Activated CD4-positive, alpha-beta memory T cell treated with anti-CD3 and anti-CD28 coated beads, Interleukin-2, amount 10 ng/mL, durations not matched to agents 7 days and 5 days (primary cell): ENCODE measurements at regions of chr3 and their contacts with region 1.

Region 1: DNA sequence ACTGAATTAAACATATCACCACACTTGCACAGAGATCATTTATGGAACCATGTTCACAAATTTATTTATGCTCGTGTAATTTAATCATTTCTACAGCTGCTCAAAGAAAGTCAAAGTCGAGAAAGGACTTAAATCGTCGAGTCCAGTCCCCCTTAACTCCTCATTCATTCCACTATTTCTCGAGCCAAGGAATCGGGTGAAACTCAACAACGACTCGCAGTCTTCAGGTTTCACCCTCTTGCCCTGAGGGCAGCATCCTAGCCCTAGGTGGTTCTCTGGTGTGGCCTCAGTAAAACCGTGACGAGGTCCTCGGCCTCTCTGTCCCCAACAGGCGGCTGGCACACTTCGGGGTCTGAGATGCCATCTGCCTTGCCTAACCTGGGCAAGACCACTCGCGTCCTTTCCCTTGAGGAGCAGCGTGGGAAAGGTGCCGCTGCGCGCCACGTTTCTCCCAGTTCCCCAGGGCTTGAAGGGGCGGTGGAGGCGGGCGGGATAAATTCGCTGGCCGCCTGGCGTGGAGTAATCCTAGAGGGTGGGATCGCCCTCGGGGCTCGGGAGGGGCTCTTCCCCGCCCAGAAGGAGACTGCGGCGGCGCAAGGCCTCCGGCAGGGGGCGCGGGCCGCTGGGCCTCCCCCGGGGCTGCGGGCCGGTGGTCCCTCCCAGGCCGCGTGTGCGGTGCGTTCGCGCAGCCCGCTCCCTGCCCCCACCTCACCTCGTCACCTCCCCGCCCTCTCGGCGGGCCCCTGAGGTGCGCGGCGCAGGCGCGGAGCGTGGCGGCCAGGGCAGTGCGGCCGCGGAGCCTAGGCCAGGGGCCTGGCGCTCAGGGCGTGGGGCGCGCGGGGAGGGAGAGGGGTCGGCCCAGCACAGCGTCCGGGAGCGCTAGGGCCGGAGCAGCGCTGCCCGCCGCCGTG is at the start of gene ZNF639:
- DNase-seq: peak; percentile 81
- H3K4me3 Mint-ChIP-seq: peak within 1 kb of the TSS; percentile 84
- H3K27ac Mint-ChIP-seq: peak within 1 kb of the TSS; percentile 84
- H3K4me1 Mint-ChIP-seq: peaks cover 25% of the 10 kb centered on the region
- H3K27me3 Mint-ChIP-seq: peaks cover 10% of the 10 kb centered on the region
- total RNA-seq, gene ZNF639: 29.8 to 31.5 TPM

Region 2: DNA sequence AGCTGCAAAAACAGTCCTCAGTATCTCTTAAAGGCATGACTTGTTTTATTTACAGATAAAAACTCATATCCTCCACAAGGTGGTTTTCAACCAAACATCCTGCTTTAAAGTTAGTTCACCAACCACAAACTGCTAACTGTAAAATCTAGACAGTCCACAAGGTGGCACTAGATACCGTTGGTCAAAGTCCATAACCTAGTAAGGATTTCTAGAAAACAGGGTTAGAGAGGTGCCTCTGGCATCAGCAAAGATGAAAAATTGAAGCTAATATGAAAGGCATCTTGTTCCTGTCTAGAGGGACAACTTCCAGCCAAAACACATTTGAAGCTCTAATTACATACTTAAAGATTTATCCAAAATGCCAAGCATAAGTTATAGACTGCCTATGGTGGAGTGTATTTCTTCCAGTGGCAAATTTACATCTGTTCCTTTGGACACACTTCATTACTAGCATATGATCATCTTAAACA is 307.0 kb before region 1 on chr3:
- CTCF ChIA-PET with region 1: interaction called, 23 read pairs
- POLR2A ChIA-PET with region 1: interaction called, 6 read pairs
- DNase-seq: peak; percentile 67
- H3K4me3 Mint-ChIP-seq: no peak overlapping the region
- H3K27ac Mint-ChIP-seq: peak overlapping the region; percentile 45
- H3K4me1 Mint-ChIP-seq: peaks cover 40% of the 10 kb centered on the region
- H3K27me3 Mint-ChIP-seq: peaks cover 10% of the 10 kb centered on the region

Region 3: GRCh38 chr3:179147873-179148615 is 174.5 kb before region 1 on chr3 and contains the start of gene PIK3CA:
- CTCF ChIA-PET with region 1: interaction called, 20 read pairs
- POLR2A ChIA-PET with region 1: interaction called, 32 read pairs
- DNase-seq: peak; percentile 96
- H3K4me3 Mint-ChIP-seq: peak within 1 kb of the TSS; percentile 95
- H3K27ac Mint-ChIP-seq: peak within 1 kb of the TSS; percentile 92
- H3K4me1 Mint-ChIP-seq: peaks cover 32% of the 10 kb centered on the region
- H3K27me3 Mint-ChIP-seq: peaks cover 22% of the 10 kb centered on the region
- total RNA-seq, gene PIK3CA: 25.9 to 26.2 TPM

Region 4: GRCh38 chr3:179347345-179348194 is 25.0 kb after region 1 on chr3 and contains the start of gene MFN1:
- CTCF ChIA-PET with region 1: interaction called, 11 read pairs
- POLR2A ChIA-PET with region 1: interaction called, 42 read pairs
- DNase-seq: peak; percentile 93
- H3K4me3 Mint-ChIP-seq: peak within 1 kb of the TSS; percentile 94
- H3K27ac Mint-ChIP-seq: peak within 1 kb of the TSS; percentile 84
- H3K4me1 Mint-ChIP-seq: peaks cover 25% of the 10 kb centered on the region
- H3K27me3 Mint-ChIP-seq: no peaks in the 10 kb centered on the region
- total RNA-seq, gene MFN1: 30.6 to 31.2 TPM

Region 5: GRCh38 chr3:179526989-179527391 is 204.4 kb after region 1 on chr3:
- CTCF ChIA-PET with region 1: no interaction called
- POLR2A ChIA-PET with region 1: no interaction called
- DNase-seq: no peak
- H3K4me3 Mint-ChIP-seq: no peak overlapping the region
- H3K27ac Mint-ChIP-seq: no peak overlapping the region
- H3K4me1 Mint-ChIP-seq: no peaks in the 10 kb centered on the region
- H3K27me3 Mint-ChIP-seq: peaks cover 15% of the 10 kb centered on the region

Region 6: DNA sequence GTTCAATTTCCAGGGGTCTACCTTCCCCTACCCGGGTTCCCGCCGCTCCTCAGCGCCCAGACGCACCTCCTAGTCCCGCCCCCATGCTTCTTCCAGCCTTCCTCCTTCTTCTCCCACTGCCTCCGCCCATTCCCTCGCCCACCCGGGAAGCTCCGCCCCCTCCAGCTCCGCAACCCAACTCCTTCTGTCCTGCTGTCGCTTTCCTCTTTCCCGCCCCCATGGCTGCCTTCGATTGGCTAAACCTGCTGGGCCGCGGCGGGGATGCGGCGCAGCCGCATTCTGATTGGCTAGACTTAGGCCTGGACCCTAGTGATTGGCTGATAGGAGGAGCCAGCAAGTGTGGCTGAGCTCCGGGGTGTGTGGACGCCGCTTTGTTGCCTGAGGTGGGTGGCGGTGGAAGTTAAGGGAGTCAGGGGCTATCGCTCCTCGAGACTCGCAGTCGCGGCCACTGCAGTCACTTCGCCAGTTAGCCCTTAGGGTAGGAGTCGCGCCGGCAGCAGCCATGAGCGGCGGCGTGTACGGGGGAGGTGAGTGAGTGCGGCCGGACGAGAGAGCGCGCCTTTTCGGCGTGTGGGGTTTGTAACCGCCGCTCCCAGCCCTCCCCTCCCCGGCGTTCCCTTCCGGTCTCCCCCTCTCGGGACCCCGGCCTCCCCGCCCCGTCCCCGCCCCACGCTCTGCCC is 240.2 kb after region 1 on chr3 and contains the start of gene ACTL6A:
- CTCF ChIA-PET with region 1: interaction called, 12 read pairs
- POLR2A ChIA-PET with region 1: interaction called, 16 read pairs
- DNase-seq: peak; percentile 99
- H3K4me3 Mint-ChIP-seq: peak within 1 kb of the TSS; percentile 96
- H3K27ac Mint-ChIP-seq: peak within 1 kb of the TSS; percentile 88
- H3K4me1 Mint-ChIP-seq: peaks cover 36% of the 10 kb centered on the region
- H3K27me3 Mint-ChIP-seq: peaks cover 15% of the 10 kb centered on the region
- total RNA-seq, gene ACTL6A: 75.1 to 81.3 TPM

Region 7: DNA sequence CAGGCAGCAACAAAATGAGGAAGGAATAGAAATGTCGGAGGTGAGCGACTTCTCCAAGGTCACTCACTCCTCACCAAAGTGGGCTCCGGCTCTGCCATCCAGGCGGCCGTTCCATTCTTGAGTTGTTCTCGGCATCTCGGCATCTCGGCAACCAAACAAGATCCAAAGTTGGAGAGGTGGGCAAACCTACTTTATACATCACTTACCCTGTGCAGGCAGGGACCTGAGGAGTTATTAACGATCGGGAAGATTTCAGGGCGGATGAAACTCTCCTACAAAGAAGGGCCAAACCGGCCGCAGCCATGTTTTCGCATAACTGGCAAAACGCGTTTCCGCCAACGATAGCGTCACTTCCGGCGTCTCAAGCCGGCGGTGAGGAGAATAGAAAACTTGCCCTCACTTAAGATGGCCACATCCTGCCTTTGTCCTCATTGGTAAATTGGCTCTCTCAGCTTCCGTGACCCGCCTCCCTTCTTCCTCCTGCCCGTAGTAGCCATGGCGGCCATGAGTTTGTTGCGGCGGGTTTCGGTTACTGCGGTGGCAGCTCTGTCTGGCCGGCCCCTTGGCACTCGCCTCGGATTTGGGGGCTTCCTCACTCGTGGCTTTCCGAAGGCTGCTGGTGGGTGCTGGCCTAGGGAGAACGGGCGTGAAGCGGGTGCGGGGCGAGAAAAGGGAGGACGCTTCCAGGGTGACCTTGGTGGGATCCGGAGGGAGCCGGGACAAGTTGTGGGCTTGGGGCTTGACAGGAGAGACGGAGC is 282.0 kb after region 1 on chr3 and contains the starts of genes MRPL47 and NDUFB5:
- CTCF ChIA-PET with region 1: no interaction called
- POLR2A ChIA-PET with region 1: interaction called, 13 read pairs
- DNase-seq: peak; percentile 94
- H3K4me3 Mint-ChIP-seq: peak within 1 kb of the TSS; percentile 99
- H3K27ac Mint-ChIP-seq: peak within 1 kb of the TSS; percentile 96
- H3K4me1 Mint-ChIP-seq: peaks cover 59% of the 10 kb centered on the region
- H3K27me3 Mint-ChIP-seq: no peaks in the 10 kb centered on the region
- total RNA-seq, gene MRPL47: 34.8 to 36.0 TPM
- total RNA-seq, gene NDUFB5: 102 to 110 TPM

Region 8: DNA sequence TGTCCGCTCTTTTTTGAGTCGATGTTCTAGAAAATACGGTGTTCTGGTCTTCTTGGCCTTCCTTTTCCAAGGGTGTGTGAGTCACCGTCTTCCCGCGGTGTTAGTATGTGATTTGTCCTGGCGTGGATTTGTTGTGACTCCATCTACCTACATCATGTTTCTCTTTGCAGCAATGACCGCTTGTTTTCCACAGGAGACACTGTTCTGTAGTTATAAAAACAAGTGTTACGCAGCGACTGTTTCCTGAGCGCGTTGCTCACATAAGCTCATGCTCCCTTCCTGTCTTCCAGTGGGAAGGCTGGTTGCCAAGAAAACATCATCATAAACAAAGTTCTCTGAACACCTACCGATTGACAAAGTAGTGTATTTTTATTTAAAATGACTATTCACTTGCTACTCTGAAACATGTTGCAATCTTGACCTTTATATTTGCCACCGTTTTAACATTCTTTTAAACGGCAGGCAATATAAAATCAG is 349.2 kb after region 1 on chr3:
- CTCF ChIA-PET with region 1: no interaction called
- POLR2A ChIA-PET with region 1: no interaction called
- DNase-seq: no peak
- H3K4me3 Mint-ChIP-seq: no peak overlapping the region
- H3K27ac Mint-ChIP-seq: no peak overlapping the region
- H3K4me1 Mint-ChIP-seq: no peaks in the 10 kb centered on the region
- H3K27me3 Mint-ChIP-seq: no peaks in the 10 kb centered on the region